ENCODE measurements at regions of chr19 and their contacts with region 1.

Region 1: DNA sequence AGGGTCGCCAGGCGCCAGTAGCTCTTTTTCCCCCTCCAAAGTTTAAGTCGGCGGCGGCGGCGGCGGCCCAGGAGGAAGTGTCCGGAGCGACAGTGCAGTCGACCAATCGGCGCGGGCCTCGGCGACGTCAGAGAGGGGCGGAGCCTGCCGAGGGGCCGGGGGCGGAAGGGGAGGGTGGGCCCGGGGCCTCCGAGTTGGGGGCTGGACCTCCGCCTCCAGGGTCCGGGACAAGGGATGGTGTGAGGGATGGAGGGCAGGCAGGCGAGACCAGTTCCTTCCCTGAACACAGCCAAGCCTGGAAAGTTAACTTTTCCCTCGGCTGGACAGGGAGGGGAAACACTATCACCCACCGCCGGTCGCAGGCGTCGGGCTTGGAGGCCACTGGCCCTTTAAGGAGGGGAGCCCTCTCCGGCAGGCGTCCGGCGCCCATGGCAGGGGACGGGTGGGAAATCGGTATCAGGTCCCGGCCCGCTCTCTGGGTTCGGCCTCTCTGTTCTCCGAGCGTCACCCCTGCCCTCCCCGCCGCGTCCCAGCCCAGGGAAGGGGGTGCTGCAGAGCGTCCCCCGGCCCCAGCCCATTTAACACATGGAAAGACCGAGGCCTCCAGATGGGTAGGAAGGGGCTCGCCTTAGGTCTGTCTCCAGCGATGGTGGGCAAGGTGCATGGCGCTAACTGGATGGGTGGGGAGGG is at the start of gene PRKD2:
- DNase-seq: peak; percentile 94
- ATAC-seq: peak; percentile 59
- H3K4me3 Mint-ChIP-seq: peak within 1 kb of the TSS; percentile 95
- H3K27ac Mint-ChIP-seq: peak within 1 kb of the TSS; percentile 96
- H3K4me1 Mint-ChIP-seq: peaks cover 36% of the 10 kb centered on the region
- H3K27me3 Mint-ChIP-seq: no peaks in the 10 kb centered on the region
- total RNA-seq, gene PRKD2: 147 to 187 TPM

Region 2: DNA sequence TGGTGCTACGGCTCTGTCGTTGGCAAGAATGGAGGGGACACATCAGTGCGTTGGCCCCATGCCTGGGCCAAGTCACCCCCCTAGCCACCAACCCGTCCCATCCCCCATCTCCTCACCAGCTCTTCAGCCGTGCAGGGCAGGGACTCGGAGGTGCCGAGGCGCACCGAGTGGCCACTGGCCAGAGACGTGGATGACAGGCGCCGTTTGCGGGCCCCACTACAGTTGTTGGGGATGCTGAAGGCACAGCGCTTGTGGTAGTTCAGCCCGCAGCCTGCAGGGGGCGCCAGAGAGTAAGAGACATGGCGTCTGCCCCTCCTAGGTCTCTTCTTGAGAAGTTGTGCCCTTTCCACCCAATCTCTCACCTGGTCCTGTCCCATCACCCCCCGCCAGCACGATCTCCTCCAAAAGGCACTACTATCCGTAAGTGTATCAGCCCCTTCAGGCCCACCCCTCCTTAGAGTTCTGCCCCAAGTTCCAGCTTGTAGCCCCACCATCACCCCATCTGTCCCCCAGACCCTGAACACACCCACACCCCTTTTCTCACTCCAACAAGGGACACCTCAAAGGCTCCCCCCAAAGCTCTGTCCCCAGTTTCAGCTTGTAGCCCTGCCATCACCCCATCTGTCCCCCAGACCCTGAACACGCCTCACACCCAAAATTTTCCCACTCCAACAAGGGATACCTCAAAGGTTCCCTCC is 12.7 kb before region 1 on chr19:
- CTCF ChIA-PET with region 1: interaction called, 55 read pairs
- DNase-seq: peak; percentile 90
- ATAC-seq: peak; percentile 88
- H3K4me3 Mint-ChIP-seq: no peak overlapping the region
- H3K27ac Mint-ChIP-seq: peak overlapping the region; percentile 67
- H3K4me1 Mint-ChIP-seq: peaks cover 6% of the 10 kb centered on the region
- H3K27me3 Mint-ChIP-seq: no peaks in the 10 kb centered on the region

Region 3: GRCh38 chr19:46788262-46788967 is 71.2 kb after region 1 on chr19 and contains the start of gene SLC1A5:
- CTCF ChIA-PET with region 1: interaction called, 11 read pairs
- DNase-seq: peak; percentile 99
- ATAC-seq: peak; percentile 72
- H3K4me3 Mint-ChIP-seq: peak within 1 kb of the TSS; percentile 90
- H3K27ac Mint-ChIP-seq: peak within 1 kb of the TSS; percentile 97
- H3K4me1 Mint-ChIP-seq: peaks cover 49% of the 10 kb centered on the region
- H3K27me3 Mint-ChIP-seq: no peaks in the 10 kb centered on the region
- total RNA-seq, gene SLC1A5: 196 to 259 TPM